ENCODE measurements at regions of chr5 and their contacts with region 1.

Region 1: DNA sequence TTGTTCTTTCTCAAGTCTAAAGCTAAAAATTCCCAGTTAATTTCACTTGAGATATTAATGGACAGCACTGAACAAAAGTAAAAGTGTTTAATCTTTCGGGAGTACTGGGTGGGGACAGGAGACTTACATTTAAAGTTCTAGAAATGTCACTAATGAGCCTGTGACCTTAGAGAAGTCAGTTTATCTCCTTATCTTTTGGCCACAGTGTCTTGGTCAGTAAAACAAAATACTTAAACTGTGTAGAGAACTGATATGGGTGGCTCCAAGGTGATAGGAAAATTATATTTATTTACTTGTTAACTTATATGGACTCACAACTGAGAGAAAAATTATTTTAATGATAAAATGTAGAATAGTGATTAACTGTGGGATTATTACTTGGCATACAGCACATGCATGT is 8.9 kb downstream of the IPO11 start:
- H3K4me3 Mint-ChIP-seq: no peak overlapping the region
- H3K27ac Mint-ChIP-seq: no peak overlapping the region
- H3K4me1 Mint-ChIP-seq: no peaks in the 10 kb centered on the region
- H3K27me3 Mint-ChIP-seq: no peaks in the 10 kb centered on the region

Region 2: DNA sequence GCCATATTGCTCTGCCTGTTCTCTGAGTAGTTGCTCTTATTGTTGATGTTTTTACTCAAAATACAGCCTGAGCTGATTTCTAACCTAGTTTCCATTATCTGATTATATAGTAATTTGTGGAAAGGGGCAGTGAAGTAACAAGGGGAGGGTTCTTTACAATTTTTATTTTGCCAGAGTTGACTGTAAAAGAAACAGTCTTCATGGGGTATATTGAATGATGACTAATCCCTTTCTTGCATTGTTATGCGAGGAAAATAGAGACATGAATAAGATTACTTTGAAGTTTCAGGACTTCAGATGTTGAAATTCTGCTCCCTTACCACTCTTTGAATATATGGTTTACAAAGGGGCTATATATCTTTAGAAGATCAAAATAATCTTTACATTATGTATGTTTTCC is 148.1 kb after region 1 on chr5:
- intact Hi-C with region 1: loop called (anchors 10 kb)
- H3K4me3 Mint-ChIP-seq: no peak overlapping the region
- H3K27ac Mint-ChIP-seq: no peak overlapping the region
- H3K4me1 Mint-ChIP-seq: peaks cover 6% of the 10 kb centered on the region
- H3K27me3 Mint-ChIP-seq: no peaks in the 10 kb centered on the region